Caco-2 (cell line): ENCODE measurements at regions of chr11 and their contacts with region 1.

Region 1: GRCh38 chr11:107196732-107197131 is 178.5 kb upstream of the GUCY1A2 start:
- DNase-seq: peak; percentile 62 to 66
- H3K4me3 ChIP-seq: no peak overlapping the region
- H3K4me3 Mint-ChIP-seq: no peak overlapping the region
- H3K27ac Mint-ChIP-seq: peak overlapping the region; percentile 7
- H3K4me1 ChIP-seq: peaks cover 23% of the 10 kb centered on the region
- H3K4me1 Mint-ChIP-seq: peaks cover 27% of the 10 kb centered on the region
- H3K27me3 ChIP-seq: no peaks in the 10 kb centered on the region
- H3K27me3 Mint-ChIP-seq: no peaks in the 10 kb centered on the region
- CTCF ChIP-seq: peak in 1 of 2 experiments; percentile 12

Region 2: DNA sequence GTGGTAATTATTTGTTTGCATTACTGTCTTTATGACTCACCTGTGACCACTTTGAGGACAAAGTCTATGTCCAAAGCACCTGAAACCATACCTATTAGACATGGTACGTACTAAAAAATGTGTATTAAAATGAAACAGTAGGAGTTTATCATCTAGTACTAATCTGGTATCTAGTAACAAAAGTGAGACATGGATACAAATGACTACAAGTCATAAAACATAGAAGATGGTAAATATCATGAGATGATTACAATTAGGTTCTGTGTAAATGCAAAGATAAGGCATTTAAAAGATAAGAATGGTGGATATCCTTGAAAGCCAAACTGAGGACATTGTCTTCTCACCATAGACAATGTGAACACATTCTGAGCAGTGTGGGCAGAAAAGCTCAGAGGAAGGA is 65.0 kb before region 1 on chr11:
- CTCF ChIA-PET with region 1: no interaction called
- POLR2A ChIA-PET with region 1: no interaction called
- intact Hi-C with region 1: loop called (anchors 1 kb)
- DNase-seq: peak in 1 of 2 experiments; percentile 15
- H3K4me3 ChIP-seq: no peak overlapping the region
- H3K4me3 Mint-ChIP-seq: no peak overlapping the region
- H3K27ac Mint-ChIP-seq: no peak overlapping the region
- H3K4me1 ChIP-seq: peaks cover 13% of the 10 kb centered on the region
- H3K4me1 Mint-ChIP-seq: peaks cover 17% of the 10 kb centered on the region
- H3K27me3 ChIP-seq: no peaks in the 10 kb centered on the region
- H3K27me3 Mint-ChIP-seq: no peaks in the 10 kb centered on the region
- CTCF ChIP-seq: no peak

Region 3: GRCh38 chr11:107157146-107157808 is 39.5 kb before region 1 on chr11:
- CTCF ChIA-PET with region 1: no interaction called
- POLR2A ChIA-PET with region 1: no interaction called
- intact Hi-C with region 1: loop called (anchors 2 kb)
- DNase-seq: peak in 1 of 2 experiments; percentile 28
- H3K4me3 ChIP-seq: no peak overlapping the region
- H3K4me3 Mint-ChIP-seq: no peak overlapping the region
- H3K27ac Mint-ChIP-seq: peak overlapping the region; percentile 23
- H3K4me1 ChIP-seq: peaks cover 23% of the 10 kb centered on the region
- H3K4me1 Mint-ChIP-seq: peaks cover 16% of the 10 kb centered on the region
- H3K27me3 ChIP-seq: no peaks in the 10 kb centered on the region
- H3K27me3 Mint-ChIP-seq: no peaks in the 10 kb centered on the region
- CTCF ChIP-seq: no peak

Region 4: GRCh38 chr11:108197351-108197750 is 1000.6 kb after region 1 on chr11:
- CTCF ChIA-PET with region 1: no interaction called
- POLR2A ChIA-PET with region 1: no interaction called
- intact Hi-C with region 1: no loop called
- DNase-seq: no peak
- H3K4me3 ChIP-seq: no peak overlapping the region
- H3K4me3 Mint-ChIP-seq: no peak overlapping the region
- H3K27ac Mint-ChIP-seq: no peak overlapping the region
- H3K4me1 ChIP-seq: no peaks in the 10 kb centered on the region
- H3K4me1 Mint-ChIP-seq: no peaks in the 10 kb centered on the region
- H3K27me3 ChIP-seq: no peaks in the 10 kb centered on the region
- H3K27me3 Mint-ChIP-seq: no peaks in the 10 kb centered on the region
- CTCF ChIP-seq: no peak